Heart right ventricle (tissue), 16 donors: ENCODE measurements at regions of chr12 and their contacts with region 1.

Region 1: GRCh38 chr12:64222009-64222765 is at the start of gene KICS2:
- DNase-seq: peak; percentile 92 to 93
- ATAC-seq: peak; percentile 98 to 100 (median 99)
- H3K4me3 ChIP-seq: peak within 1 kb of the TSS; percentile 60 to 94 (median 88)
- H3K27ac ChIP-seq: peak within 1 kb of the TSS; percentile 44 to 95 (median 90)
- H3K4me1 ChIP-seq: peaks cover 0 to 26% (median 11%) of the 10 kb centered on the region in 9 donors
- H3K27me3 ChIP-seq: no peaks in the 10 kb centered on the region
- CTCF ChIP-seq: peak in 3 of 9 donors; percentile 6 to 7 (median 6)
- total RNA-seq, gene KICS2: 3.2 to 6.1 (median 4.2) TPM

Region 2: DNA sequence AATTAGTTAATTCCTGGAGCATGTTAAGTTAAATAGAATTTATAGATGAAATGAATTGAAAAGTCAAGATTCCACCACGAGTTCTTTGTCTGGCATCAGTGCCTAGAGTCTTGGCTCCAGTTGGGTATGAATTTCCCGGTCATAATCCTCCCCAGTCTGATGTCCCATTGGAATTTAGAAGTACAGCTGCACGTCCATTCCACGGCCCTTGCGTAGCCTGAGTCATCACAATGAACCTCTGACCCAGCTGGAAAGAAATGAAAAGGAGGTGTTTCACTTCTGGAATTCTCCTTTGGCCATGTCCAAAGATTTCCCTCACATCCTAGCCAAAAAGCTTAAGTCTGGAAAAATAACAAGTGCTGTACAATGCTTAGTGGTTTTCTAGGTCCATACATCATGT is 122.8 kb before region 1 on chr12:
- intact Hi-C with region 1: loop called in 1 of 10 experiments (anchors 10 kb)
- DNase-seq: peak in 1 of 2 donors; percentile 34
- ATAC-seq: peak; percentile 59 to 89 (median 84)
- H3K4me3 ChIP-seq: no peak overlapping the region
- H3K27ac ChIP-seq: peak overlapping the region in 4 of 10 donors; percentile 9 to 65 (median 32)
- H3K4me1 ChIP-seq: peaks cover 0 to 45% (median 15%) of the 10 kb centered on the region in 9 donors
- H3K27me3 ChIP-seq: no peaks in the 10 kb centered on the region
- CTCF ChIP-seq: no peak